AG04449 (cell line): ENCODE measurements at regions of chr10 and their contacts with region 1.

Region 1: DNA sequence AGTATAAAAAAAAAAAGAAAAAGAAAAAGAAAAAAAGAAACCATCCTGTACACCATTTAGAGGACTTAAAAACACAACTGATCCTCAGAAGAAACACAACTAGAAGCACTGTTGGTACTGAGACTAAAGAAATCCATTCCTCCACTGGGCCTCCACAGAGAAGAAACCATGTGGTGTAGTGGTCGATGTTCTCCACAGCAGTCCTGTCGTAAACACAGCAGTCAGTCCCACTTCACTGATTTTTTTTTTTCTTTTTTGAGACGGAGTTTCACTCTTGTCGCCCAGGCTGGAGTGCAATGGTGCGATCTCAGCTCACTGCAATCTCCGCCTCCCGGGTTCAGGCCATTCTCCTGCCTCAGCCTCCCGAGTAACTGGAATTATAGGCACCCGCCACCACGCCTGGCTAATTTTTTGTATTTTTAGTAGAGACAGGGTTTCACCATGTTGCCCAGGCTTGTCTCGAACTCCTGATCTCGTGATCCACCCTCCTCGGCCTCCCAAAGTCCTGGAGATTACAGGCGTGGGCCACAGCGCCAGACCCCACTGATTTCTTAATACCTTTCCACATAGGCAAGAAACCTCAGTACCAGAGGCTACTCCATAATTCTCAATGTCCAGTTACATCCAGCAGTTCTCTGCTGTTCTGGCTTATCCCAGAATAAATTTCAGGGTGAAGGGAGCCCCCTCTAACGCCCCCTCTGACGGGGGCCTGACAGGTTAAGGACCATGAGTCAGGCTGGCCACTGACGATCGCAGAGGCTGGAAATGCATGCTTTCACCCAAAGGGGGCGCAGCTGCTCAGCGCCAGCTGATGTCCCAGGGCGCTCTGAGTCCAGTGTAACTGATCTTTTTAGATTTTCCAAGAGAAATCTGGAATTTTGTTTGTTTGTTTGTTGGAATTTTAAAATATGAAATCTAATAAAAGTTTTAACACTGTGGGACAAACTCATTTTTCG is 24.8 kb upstream of the FFAR4 start:
- DNase-seq: no peak
- H3K4me3 ChIP-seq: no peak overlapping the region
- CTCF ChIP-seq: peak; percentile 86

Region 2: GRCh38 chr10:93420091-93420490 is 121.6 kb before region 1 on chr10:
- CTCF ChIA-PET with region 1: no interaction called
- POLR2A ChIA-PET with region 1: no interaction called
- DNase-seq: no peak
- H3K4me3 ChIP-seq: no peak overlapping the region
- CTCF ChIP-seq: no peak

Region 3: GRCh38 chr10:93680412-93681047 is 138.8 kb after region 1 on chr10:
- CTCF ChIA-PET with region 1: interaction called, 40 read pairs
- POLR2A ChIA-PET with region 1: no interaction called
- DNase-seq: no peak
- H3K4me3 ChIP-seq: no peak overlapping the region
- CTCF ChIP-seq: peak; percentile 3